ENCODE measurements at regions of chr12 and their contacts with region 1.

Region 1: GRCh38 chr12:13218641-13219040 is 22.1 kb downstream of the EMP1 start:
- DNase-seq: no peak
- ATAC-seq: no peak

Region 2: GRCh38 chr12:13094347-13094746 is 124.3 kb before region 1 on chr12:
- intact Hi-C with region 1: loop called (anchors 5 to 10 kb)
- DNase-seq: no peak
- ATAC-seq: no peak

Region 3: GRCh38 chr12:13124661-13125505 is 93.8 kb before region 1 on chr12:
- intact Hi-C with region 1: no loop called
- DNase-seq: no peak
- ATAC-seq: no peak

Region 4: DNA sequence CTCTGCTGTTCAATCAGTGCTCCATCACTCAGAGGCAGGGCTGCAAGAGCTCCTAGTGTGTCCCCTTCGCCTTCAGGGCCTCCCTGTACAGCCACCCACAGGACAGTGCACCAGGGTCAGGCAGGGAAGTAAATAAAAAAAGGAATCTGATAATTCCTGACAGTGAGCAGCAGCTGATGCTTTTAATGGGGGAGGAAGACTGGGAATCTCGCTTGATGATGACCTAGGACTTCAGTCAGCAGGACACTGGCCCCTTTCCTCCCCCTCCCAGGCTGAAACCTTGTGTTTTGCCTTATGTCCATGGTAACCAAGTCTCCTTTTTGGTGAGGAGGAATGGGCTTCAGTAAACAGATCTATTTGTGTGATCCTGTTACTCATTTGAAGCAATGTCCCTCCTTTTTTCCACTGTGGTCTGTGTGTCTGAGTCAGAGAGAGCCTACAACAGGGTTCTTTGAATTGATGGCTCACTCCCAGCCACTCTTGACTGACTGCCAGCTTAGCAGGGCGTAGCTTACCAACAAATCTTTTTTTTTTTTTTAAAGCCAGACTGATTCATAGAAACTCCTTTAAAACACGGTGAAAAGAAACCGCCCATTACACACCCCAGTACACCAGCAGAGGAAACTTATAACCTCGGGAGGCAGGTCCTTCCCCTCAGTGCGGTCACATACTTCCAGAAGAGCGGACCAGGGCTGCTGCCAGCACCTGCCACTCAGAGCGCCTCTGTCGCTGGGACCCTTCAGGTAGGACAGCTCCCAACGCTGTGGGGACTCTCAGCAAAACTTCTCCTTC is 22.3 kb before region 1 on chr12 and contains the start of gene EMP1:
- intact Hi-C with region 1: no loop called
- DNase-seq: peak; percentile 90 to 96
- ATAC-seq: peak; percentile 81
- total RNA-seq, gene EMP1: 459 to 1,135 TPM

Region 5: GRCh38 chr12:13304924-13305323 is 86.3 kb after region 1 on chr12:
- intact Hi-C with region 1: no loop called
- DNase-seq: no peak
- ATAC-seq: no peak

Region 6: GRCh38 chr12:13367973-13368372 is 149.3 kb after region 1 on chr12:
- intact Hi-C with region 1: no loop called
- DNase-seq: no peak
- ATAC-seq: no peak

Measured in left colon (tissue), 2 donors.